AG04449 (cell line): ENCODE measurements at regions of chr12 and their contacts with region 1.

Region 1: GRCh38 chr12:47837190-47838171 is 17.8 kb upstream of the HDAC7 start:
- DNase-seq: no peak
- H3K4me3 ChIP-seq: no peak overlapping the region
- CTCF ChIP-seq: peak; percentile 80

Region 2: DNA sequence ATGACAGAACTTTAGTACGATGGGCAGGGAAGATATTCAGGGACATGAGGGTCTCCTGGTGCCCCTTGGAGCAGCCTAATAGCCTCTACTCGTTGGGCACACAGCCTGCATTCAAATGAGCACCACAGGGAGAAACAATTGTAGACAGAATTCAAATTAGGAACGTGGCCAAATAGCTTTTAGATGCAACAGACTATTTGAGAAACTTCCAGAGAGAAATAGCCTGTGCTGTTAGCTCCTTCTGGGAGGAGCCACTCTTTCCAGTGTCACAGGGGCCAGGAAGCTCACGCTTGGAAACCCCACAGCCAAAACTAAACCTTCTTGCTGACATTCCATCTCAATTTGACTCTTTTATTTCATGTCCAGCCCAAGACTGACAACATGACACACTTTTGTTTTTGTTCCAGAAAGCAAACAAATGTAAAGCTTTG is 246.1 kb before region 1 on chr12:
- CTCF ChIA-PET with region 1: no interaction called
- POLR2A ChIA-PET with region 1: no interaction called
- DNase-seq: no peak
- H3K4me3 ChIP-seq: no peak overlapping the region
- CTCF ChIP-seq: no peak

Region 3: DNA sequence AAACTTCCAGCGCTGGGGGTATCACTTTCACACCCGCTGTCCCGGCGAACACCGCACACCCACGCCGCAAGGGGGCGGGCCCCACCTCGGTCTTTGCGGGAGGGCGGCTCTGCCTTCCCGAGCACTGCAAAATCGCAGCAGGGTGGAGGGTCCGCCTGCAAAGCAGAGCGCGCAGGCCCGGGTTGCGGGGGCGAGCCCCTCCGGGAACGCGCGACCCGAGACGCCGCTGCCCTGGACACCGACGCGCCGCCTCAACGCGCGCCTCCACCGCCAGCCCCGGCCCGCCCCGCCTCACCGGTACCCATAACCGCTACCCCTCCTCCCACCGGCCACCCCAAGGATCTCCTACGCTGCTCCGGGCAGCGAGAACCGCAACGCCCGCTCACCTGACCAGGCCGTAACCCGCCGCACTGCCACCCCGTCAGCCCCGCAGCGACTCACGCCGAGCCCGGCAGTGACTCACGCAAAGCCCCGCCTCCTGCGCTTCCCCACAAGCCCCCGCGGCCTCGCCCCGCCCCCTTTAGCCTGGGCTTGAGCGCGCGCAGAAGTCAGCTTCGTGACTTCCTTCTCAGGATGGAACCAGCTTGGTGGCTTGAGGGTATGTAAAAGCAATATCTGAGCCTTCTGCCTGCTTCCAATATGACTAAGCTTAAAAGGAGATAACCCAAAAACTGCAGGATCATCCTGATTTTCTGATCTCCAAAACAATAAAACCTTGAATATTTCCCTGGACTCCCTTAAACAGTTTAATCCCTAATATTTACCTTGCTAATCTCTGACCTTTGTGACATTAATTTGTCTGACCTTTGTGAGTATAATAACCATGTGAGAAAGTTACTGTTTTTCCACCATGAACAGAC is 131.7 kb before region 1 on chr12 and contains the start of gene RPAP3:
- CTCF ChIA-PET with region 1: interaction called, 55 read pairs
- POLR2A ChIA-PET with region 1: no interaction called
- DNase-seq: no peak
- H3K4me3 ChIP-seq: peak within 1 kb of the TSS; percentile 86
- CTCF ChIP-seq: peak; percentile 81

Region 4: DNA sequence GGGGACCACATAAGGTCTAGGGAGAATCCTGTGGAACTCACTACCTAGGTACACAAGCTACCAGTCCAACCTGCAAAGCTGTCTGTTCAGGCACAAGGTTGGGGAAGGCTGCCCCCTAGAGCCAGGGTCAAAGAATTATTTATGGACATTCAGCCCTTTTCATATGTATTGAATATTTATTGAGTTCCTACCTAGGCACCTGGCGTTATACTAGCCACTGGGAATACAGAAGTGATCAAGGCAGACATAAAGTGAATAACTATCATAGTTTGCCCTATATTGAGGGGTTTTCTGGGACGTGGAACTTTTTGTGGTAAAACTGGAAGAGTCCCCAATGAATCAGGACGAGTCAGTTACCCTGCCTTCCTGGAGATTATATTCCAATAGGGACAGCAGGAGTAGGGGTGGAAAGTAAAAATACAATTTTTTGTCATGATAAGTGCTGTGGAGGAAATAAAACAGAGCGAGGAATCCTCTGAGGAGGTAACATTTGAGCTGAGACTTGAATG is 70.2 kb before region 1 on chr12:
- CTCF ChIA-PET with region 1: interaction called, 413 read pairs
- POLR2A ChIA-PET with region 1: no interaction called
- DNase-seq: no peak
- H3K4me3 ChIP-seq: no peak overlapping the region
- CTCF ChIP-seq: peak; percentile 29

Region 5: GRCh38 chr12:47850153-47851084 is 12.9 kb after region 1 on chr12:
- CTCF ChIA-PET with region 1: interaction called, 108 read pairs
- POLR2A ChIA-PET with region 1: interaction called, 3 read pairs
- DNase-seq: no peak
- H3K4me3 ChIP-seq: no peak overlapping the region
- CTCF ChIP-seq: no peak

Region 6: GRCh38 chr12:47881826-47882427 is 44.4 kb after region 1 on chr12:
- CTCF ChIA-PET with region 1: interaction called, 25 read pairs
- POLR2A ChIA-PET with region 1: no interaction called
- DNase-seq: peak; percentile 97
- H3K4me3 ChIP-seq: no peak overlapping the region
- CTCF ChIP-seq: no peak